ENCODE measurements at regions of chr9 and their contacts with region 1.

Region 1: GRCh38 chr9:73116031-73116430 is 35.6 kb upstream of the ANXA1 start:
- DNase-seq: no peak
- H3K4me3 Mint-ChIP-seq: no peak overlapping the region
- H3K27ac Mint-ChIP-seq: no peak overlapping the region
- H3K4me1 Mint-ChIP-seq: peaks cover 38% of the 10 kb centered on the region
- H3K27me3 Mint-ChIP-seq: peaks cover 2% of the 10 kb centered on the region

Region 2: GRCh38 chr9:72971411-72971810 is 144.6 kb before region 1 on chr9:
- intact Hi-C with region 1: no loop called
- DNase-seq: no peak
- H3K4me3 Mint-ChIP-seq: no peak overlapping the region
- H3K27ac Mint-ChIP-seq: no peak overlapping the region
- H3K4me1 Mint-ChIP-seq: no peaks in the 10 kb centered on the region
- H3K27me3 Mint-ChIP-seq: peaks cover 1% of the 10 kb centered on the region

Region 3: DNA sequence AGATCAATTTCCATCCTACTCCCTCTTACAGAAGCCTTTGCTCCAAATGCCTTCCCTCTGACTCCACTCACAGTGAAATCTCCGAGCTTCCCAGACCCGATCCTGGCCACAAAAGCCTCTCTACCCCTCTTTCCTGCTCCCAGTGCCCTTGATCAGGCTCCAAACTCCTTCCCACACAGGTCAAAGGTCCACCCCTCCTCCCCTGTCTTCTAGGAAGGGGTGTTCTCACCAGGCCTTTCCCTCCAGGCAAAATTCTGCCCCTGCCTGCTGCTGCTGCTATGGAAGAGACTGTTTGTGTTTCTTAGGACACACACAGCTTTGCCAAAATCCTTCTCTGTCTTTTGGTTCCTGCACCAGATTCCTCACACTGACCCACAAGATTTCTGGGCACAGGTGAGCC is 77.4 kb before region 1 on chr9:
- intact Hi-C with region 1: no loop called
- DNase-seq: no peak
- H3K4me3 Mint-ChIP-seq: no peak overlapping the region
- H3K27ac Mint-ChIP-seq: no peak overlapping the region
- H3K4me1 Mint-ChIP-seq: no peaks in the 10 kb centered on the region
- H3K27me3 Mint-ChIP-seq: peaks cover 16% of the 10 kb centered on the region

Region 4: DNA sequence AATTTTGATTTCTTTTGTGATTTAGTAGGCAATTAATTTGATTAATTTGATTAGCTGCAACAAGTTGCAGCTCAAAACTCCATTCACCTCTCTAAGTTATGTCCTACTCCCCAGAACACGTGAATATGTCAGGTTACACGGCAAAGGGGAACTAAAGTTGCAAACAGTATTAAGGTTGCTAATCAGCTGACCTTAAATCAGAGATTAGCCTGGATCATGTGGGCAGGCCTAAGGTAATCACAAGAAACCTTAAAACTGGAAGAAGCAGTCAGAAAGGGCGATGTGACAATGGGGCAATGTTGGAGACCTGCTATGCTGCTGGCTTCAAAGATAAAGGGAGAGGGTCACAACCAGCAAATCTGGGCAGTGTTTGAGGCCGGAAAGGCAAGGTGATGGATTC is 11.7 kb before region 1 on chr9:
- intact Hi-C with region 1: loop called (anchors 1 kb)
- DNase-seq: no peak
- H3K4me3 Mint-ChIP-seq: no peak overlapping the region
- H3K27ac Mint-ChIP-seq: no peak overlapping the region
- H3K4me1 Mint-ChIP-seq: no peaks in the 10 kb centered on the region
- H3K27me3 Mint-ChIP-seq: peaks cover 19% of the 10 kb centered on the region

Region 5: DNA sequence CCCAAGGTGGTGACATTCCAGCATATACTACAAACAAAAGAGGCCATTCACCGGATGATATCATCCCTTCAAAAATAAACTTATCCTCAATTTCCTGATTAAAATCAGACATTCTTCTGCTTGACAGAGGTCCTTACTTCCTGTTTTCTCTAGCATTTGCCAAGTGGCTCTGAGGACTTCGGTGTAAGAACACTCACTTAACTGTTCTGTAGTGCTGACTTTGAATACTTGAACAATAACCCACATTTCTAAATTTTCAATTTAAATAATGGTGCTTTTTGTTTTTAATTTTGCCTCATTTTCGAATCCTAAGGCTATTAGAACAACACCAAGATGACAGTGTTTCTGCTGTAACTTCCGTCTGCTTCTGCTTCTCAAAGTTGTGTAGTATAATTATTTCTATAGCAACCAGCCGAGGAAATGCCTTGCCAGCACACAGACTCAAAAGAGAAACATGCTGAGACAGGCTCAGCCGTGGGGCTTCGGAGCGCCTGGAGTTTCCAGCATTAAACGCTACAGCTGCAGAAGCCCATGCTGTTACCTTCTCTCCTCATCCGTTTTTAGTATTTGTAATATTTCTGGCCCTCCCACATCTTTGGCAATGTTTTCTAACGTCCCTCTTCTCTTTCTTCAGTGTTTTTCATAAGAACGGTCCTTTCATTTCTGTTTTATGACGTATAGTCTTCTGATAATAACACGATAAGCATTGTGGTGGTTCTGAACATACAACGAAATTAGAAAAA is 16.2 kb after region 1 on chr9:
- intact Hi-C with region 1: loop called (anchors 1 kb)
- DNase-seq: peak; percentile 73
- H3K4me3 Mint-ChIP-seq: peak overlapping the region; percentile 83
- H3K27ac Mint-ChIP-seq: peak overlapping the region; percentile 98
- H3K4me1 Mint-ChIP-seq: peaks cover 42% of the 10 kb centered on the region
- H3K27me3 Mint-ChIP-seq: no peaks in the 10 kb centered on the region